ENCODE measurements at regions of chr3 and their contacts with region 1.

Region 1: GRCh38 chr3:50600841-50601591 is 10.6 kb downstream of the CISH start:
- DNase-seq: peak; percentile 43 to 90 (median 58)
- ATAC-seq: peak; percentile 84
- H3K4me3 ChIP-seq: peak overlapping the region; percentile 57
- H3K4me3 Mint-ChIP-seq: peak overlapping the region; percentile 71 to 97 (median 84)
- H3K27ac ChIP-seq: peak overlapping the region; percentile 93
- H3K27ac Mint-ChIP-seq: peak overlapping the region; percentile 89 to 99 (median 95)
- H3K4me1 ChIP-seq: peaks cover 67 to 71% of the 10 kb centered on the region in 2 donors
- H3K4me1 Mint-ChIP-seq: peaks cover 63 to 83% (median 77%) of the 10 kb centered on the region in 7 donors
- H3K27me3 ChIP-seq: no peaks in the 10 kb centered on the region
- H3K27me3 Mint-ChIP-seq: no peaks in the 10 kb centered on the region

Region 2: DNA sequence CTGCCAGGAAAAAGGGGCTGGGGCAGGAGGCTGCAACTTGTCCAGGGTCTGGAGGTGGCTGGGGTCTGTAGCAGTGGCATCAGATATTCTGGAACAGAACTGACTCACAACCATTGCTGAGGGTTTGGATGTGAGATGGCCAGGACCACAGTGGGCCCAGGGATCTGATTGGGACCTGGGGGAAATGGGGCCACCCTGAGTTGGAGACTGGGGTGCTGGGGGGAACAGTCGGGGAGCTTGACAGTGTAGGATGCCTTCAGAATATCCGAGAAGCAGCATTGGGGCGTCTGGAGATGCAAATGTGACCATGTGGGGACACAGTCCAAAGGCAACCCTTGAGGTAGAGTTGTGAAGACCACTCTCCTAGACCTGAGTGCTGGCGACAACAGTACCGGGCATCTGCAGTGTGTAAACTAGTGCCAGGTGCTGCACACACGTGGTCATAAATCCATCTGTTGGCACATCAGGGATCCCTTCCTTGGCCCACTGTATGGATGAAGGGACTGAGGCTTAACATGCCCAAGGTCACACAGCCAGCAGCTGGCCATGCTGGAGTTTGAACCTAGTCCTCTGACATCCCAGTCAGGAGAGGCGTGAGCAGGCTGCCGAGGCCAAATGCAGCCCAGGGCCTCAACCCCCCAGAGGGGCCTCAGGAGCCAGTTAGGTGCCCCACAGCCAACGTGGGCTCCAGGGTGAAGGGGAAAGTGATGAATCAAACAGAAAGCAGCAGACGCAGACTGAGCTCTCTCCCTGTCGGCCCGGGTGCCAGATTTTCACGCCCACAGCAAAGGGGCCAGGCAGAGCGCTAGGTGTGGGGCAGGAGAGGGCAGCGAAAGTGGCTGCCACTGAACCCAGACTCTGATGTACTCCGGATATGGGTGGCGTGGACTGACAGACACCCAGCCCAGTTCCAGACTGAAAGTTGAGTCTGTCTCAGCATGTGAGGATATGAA is 12.9 kb before region 1 on chr3:
- CTCF ChIA-PET with region 1: interaction called, 578 read pairs
- POLR2A ChIA-PET with region 1: interaction called, 730 read pairs
- intact Hi-C with region 1: loop called (anchors 1 kb)
- DNase-seq: peak in 1 of 9 donors; percentile 80
- ATAC-seq: peak; percentile 62
- H3K4me3 ChIP-seq: no peak overlapping the region
- H3K4me3 Mint-ChIP-seq: peak overlapping the region; percentile 25 to 69 (median 58)
- H3K27ac ChIP-seq: peak overlapping the region; percentile 62
- H3K27ac Mint-ChIP-seq: peak overlapping the region; percentile 67 to 95 (median 83)
- H3K4me1 ChIP-seq: peaks cover 42 to 55% of the 10 kb centered on the region in 2 donors
- H3K4me1 Mint-ChIP-seq: peaks cover 30 to 88% (median 60%) of the 10 kb centered on the region in 7 donors
- H3K27me3 ChIP-seq: no peaks in the 10 kb centered on the region
- H3K27me3 Mint-ChIP-seq: no peaks in the 10 kb centered on the region